HEK293 (cell line): ENCODE measurements at regions of chr5 and their contacts with region 1.

Region 1: DNA sequence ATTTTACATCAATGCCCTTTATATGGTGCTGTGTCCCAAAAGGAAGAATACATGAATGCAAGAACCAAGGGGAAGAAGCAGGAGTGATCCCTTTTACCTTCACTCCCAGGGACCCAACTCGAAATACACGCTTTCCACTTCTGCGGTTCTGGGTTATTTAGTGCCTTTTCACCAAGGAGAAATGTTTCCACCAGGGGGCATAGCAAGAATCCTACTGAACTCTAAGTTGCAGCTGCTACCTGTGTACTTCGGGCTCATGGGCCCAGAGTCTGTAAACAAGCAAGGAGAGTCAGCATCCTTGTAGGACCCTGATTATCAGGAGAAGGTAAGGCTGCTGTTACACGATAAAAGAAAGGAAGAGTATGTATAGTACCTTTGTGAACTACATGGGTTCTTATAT is 45.7 kb downstream of the DPYSL3 start:
- H3K4me3 ChIP-seq: no peak overlapping the region
- H3K27ac ChIP-seq: no peak overlapping the region
- H3K4me1 ChIP-seq: 0 out of 2 replicates have a peak, but pooled peaks cover 3% of the 10 kb centered on the region
- CTCF ChIP-seq: no peak

Region 2: DNA sequence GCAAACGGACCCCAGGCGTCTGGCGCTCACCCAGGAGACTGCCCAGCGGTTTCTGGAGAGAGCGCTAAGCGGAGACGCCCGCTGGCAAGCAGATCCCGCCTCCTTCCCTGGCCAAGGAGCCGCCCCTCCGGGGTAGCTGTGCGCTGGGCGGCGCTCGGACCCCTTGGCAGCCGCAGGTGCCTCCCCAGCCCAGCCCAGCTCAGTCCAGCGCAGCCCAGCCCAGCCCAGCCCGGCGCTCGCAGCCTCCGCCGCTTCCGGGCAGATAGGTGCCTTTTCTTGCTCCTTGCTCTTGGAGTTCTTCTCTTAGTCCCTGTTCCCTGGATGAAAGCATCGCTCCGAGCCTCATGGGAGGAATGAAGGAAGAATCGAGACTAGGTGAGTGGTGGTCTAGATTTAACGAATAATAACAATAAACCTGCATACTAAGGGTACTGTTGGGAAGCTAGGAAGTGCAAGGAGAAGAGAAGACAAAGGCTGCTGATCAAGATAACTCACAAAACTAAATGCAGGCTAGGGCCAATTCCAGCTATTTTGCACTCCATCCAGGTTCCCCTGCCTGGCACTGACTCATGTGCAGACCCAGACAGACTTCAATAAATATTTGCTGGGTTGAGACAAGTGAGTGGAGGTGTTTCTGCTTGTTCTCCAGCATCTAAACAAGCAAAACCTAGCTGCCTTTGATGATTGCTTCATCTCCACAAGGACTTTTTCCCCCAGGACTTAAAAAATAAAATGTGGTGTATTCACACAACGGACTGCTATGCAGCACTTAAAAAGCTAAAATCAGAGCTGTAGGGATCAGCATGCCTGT is 229.2 kb before region 1 on chr5 and contains the start of gene STK32A:
- CTCF ChIA-PET with region 1: no interaction called
- POLR2A ChIA-PET with region 1: no interaction called
- H3K4me3 ChIP-seq: peak within 1 kb of the TSS; percentile 66
- H3K27ac ChIP-seq: no peak within 1 kb of the TSS
- H3K4me1 ChIP-seq: no peaks in the 10 kb centered on the region
- CTCF ChIP-seq: peak; percentile 38; the same call in 1 of the 2 replicates

Region 3: DNA sequence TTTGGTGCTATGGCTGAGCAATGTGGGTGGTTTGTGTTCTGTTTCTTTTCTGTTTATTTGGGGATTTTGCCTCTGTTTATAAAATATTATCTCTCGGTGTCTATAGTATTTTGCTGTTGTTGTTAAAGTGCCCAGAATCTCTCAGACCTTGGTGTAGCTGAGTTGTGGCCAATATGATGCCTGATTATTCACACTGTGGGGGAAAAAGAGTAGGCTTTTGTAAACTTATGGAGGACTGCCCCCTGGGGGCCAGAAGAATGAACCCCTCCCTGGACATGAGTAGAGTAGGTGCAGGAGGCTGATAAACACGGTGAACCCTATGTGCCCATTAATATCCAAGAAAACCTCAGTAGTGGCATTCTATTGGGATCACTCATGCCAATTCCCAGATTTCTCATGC is 94.6 kb after region 1 on chr5:
- CTCF ChIA-PET with region 1: interaction called, 38 read pairs
- POLR2A ChIA-PET with region 1: no interaction called
- H3K4me3 ChIP-seq: no peak overlapping the region
- H3K27ac ChIP-seq: no peak overlapping the region
- H3K4me1 ChIP-seq: no peaks in the 10 kb centered on the region
- CTCF ChIP-seq: peak; percentile 46; the same call in 1 of the 2 replicates